ENCODE measurements at regions of chr16 and their contacts with region 1.

Region 1: GRCh38 chr16:8899709-8900317 is 17.7 kb downstream of the LITAFD start:
- DNase-seq: no peak
- ATAC-seq: no peak
- H3K4me3 ChIP-seq: no peak overlapping the region
- H3K4me3 Mint-ChIP-seq: no peak overlapping the region
- H3K27ac ChIP-seq: no peak overlapping the region
- H3K27ac Mint-ChIP-seq: peak overlapping the region in 2 of 9 donors; percentile 8 to 42
- H3K4me1 ChIP-seq: no peaks in the 10 kb centered on the region
- H3K4me1 Mint-ChIP-seq: peaks cover 0 to 2% (median 0%) of the 10 kb centered on the region in 7 donors
- H3K27me3 ChIP-seq: no peaks in the 10 kb centered on the region
- H3K27me3 Mint-ChIP-seq: no peaks in the 10 kb centered on the region

Region 2: DNA sequence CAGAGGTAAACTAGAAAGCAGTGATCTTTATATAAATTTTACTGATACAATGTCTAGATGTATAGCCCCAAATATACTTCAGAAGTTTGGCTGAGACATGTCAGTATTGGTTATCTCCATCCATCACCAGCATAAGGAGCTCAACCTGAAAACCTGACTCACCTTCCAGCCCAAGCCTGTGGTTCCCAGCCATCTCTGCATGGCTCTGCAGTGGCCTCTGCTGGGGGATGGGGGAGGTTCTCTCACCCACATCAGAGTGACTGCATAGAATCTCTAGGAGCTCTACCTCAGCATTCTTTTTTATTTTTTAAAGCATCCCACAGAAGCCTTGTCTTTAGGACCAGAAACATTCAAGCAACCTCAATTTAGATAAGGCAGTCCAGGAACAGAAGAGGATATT is 36.6 kb after region 1 on chr16:
- CTCF ChIA-PET with region 1: interaction called, 4 read pairs
- POLR2A ChIA-PET with region 1: no interaction called
- intact Hi-C with region 1: loop called in 1 of 2 experiments (anchors 5 kb)
- DNase-seq: peak; percentile 29 to 75 (median 60)
- ATAC-seq: peak; percentile 94
- H3K4me3 ChIP-seq: no peak overlapping the region
- H3K4me3 Mint-ChIP-seq: peak overlapping the region in 8 of 10 donors; percentile 3 to 60 (median 38)
- H3K27ac ChIP-seq: no peak overlapping the region
- H3K27ac Mint-ChIP-seq: peak overlapping the region in 6 of 9 donors; percentile 21 to 87 (median 63)
- H3K4me1 ChIP-seq: peaks cover 35 to 43% of the 10 kb centered on the region in 2 donors
- H3K4me1 Mint-ChIP-seq: peaks cover 54 to 98% (median 93%) of the 10 kb centered on the region in 7 donors
- H3K27me3 ChIP-seq: no peaks in the 10 kb centered on the region
- H3K27me3 Mint-ChIP-seq: no peaks in the 10 kb centered on the region

Region 3: GRCh38 chr16:9139965-9140364 is 240.2 kb after region 1 on chr16:
- CTCF ChIA-PET with region 1: no interaction called
- POLR2A ChIA-PET with region 1: no interaction called
- intact Hi-C with region 1: no loop called
- DNase-seq: no peak
- ATAC-seq: peak; percentile 56
- H3K4me3 ChIP-seq: no peak overlapping the region
- H3K4me3 Mint-ChIP-seq: peak overlapping the region in 3 of 10 donors; percentile 2 to 34 (median 31)
- H3K27ac ChIP-seq: no peak overlapping the region
- H3K27ac Mint-ChIP-seq: no peak overlapping the region
- H3K4me1 ChIP-seq: peaks cover 0 to 9% of the 10 kb centered on the region in 2 donors
- H3K4me1 Mint-ChIP-seq: peaks cover 15 to 24% (median 19%) of the 10 kb centered on the region in 7 donors
- H3K27me3 ChIP-seq: no peaks in the 10 kb centered on the region
- H3K27me3 Mint-ChIP-seq: peaks cover 0 to 16% (median 10%) of the 10 kb centered on the region in 5 donors

Measured in naive thymus-derived CD4-positive, alpha-beta T cell (primary cell).